CD8-positive, alpha-beta memory T cell (primary cell): ENCODE measurements at regions of chr1 and their contacts with region 1.

Region 1: DNA sequence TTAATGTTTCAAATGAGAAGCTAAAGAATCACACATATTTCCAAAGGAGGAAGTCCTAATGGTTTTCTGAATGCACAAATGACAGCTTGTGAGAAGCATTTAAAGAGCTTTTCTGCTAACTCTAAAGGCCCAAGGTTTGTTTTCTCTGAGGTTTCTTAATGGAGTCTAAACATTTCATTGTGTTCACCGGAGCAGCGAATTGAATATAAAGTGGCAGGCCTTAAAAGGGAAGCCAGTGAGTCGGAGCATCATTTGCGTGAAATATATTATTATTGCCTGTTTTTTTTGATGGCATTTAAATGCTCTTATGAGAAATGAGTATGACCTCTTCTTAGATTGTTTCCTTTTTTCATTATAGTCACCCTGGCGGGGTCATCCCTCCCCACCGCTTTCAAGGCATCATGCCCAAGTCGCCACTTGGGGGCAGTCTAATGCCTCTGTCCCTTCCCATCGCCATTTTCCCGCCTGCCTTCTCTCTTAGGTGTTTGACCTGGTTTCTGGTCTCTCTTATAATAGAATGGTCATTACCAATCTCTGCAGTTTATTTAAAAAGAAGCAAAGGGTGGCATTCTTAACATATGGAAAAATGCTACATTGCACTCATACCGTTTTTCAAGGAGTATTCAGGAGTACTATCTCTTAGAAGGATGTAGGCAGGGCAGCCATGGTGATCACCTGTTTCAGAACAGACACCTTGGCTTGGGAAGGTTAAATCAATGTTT is 25.3 kb upstream of the OVAAL start:
- DNase-seq: peak; percentile 28 to 65 (median 32)
- H3K4me3 ChIP-seq: no peak overlapping the region
- H3K4me3 Mint-ChIP-seq: no peak overlapping the region
- H3K27ac ChIP-seq: no peak overlapping the region
- H3K27ac Mint-ChIP-seq: peak overlapping the region in 1 of 8 donors; percentile 8
- H3K4me1 ChIP-seq: no peaks in the 10 kb centered on the region
- H3K4me1 Mint-ChIP-seq: no peaks in the 10 kb centered on the region
- H3K27me3 ChIP-seq: no peaks in the 10 kb centered on the region
- H3K27me3 Mint-ChIP-seq: peaks cover 8 to 27% of the 10 kb centered on the region in 2 donors

Region 2: DNA sequence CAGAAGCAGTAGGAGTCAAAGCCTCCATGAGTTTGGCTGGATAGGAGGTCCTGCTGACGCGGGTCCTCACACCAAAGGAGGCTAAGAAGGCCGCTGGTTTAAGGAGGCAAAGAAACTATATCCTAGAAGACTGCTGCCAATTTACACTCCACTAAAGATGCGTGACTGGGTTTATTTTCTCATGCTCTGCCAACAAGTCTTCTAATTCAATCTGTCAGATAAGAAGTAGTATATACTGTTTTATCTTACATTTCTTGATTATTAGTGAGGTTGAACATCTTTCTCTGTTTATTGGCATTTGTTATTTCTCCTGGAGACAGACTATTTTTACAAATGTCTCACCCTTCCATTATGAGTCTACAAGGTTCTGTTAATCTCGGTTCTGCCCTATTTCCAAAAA is 65.1 kb before region 1 on chr1:
- CTCF ChIA-PET with region 1: no interaction called
- POLR2A ChIA-PET with region 1: no interaction called
- DNase-seq: no peak
- H3K4me3 ChIP-seq: no peak overlapping the region
- H3K4me3 Mint-ChIP-seq: no peak overlapping the region
- H3K27ac ChIP-seq: no peak overlapping the region
- H3K27ac Mint-ChIP-seq: no peak overlapping the region
- H3K4me1 ChIP-seq: no peaks in the 10 kb centered on the region
- H3K4me1 Mint-ChIP-seq: peaks cover 19 to 35% (median 23%) of the 10 kb centered on the region in 3 donors
- H3K27me3 ChIP-seq: no peaks in the 10 kb centered on the region
- H3K27me3 Mint-ChIP-seq: no peaks in the 10 kb centered on the region

Region 3: DNA sequence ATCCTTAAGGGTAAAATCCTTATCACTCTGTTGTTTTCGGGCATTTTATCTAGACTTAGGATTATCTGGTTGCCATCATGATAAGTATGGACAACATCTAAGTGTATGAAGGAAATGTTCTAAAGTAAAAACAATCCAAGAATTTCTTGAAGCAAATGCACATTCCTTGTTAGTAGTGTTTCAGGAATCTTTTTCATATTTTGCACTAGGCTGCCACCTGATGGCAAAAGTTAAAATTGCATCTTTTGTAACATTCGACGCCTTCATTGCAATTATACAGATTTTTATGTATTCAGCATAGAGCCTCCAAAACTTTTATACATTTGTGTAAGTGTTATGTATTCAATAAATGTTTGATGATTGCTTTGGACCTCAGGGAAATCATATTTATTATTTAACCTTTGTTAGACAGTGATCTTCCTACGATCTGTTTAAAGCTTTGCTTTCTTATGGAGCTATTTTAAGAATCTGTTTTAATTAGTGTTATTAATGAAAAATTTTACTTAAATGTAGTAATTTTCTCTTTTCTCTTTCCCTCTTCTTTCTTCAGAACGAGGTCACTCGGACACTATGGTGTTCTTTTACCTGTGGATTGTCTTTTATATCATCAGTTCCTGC is 329.8 kb after region 1 on chr1:
- CTCF ChIA-PET with region 1: interaction called, 17 read pairs
- POLR2A ChIA-PET with region 1: no interaction called
- DNase-seq: peak in 3 of 5 donors; percentile 3 to 19 (median 16)
- H3K4me3 ChIP-seq: no peak overlapping the region
- H3K4me3 Mint-ChIP-seq: no peak overlapping the region
- H3K27ac ChIP-seq: no peak overlapping the region
- H3K27ac Mint-ChIP-seq: no peak overlapping the region
- H3K4me1 ChIP-seq: no peaks in the 10 kb centered on the region
- H3K4me1 Mint-ChIP-seq: no peaks in the 10 kb centered on the region
- H3K27me3 ChIP-seq: no peaks in the 10 kb centered on the region
- H3K27me3 Mint-ChIP-seq: no peaks in the 10 kb centered on the region